ENCODE measurements at regions of chr1 and their contacts with region 1.

Region 1: GRCh38 chr1:154479764-154480421 is 22.1 kb upstream of the TDRD10 start:
- DNase-seq: peak; percentile 84
- H3K4me3 ChIP-seq: no peak overlapping the region; a peak in 1 of 4 replicates
- H3K27ac ChIP-seq: peak overlapping the region; percentile 17 to 78; a peak in 2 of 4 replicates
- H3K4me1 ChIP-seq: peaks cover 5 to 18% of the 10 kb centered on the region in 2 experiments; a peak in 2 of 4 replicates
- H3K27me3 ChIP-seq: no peaks in the 10 kb centered on the region
- CTCF ChIP-seq: peak; percentile 96
- EP300 ChIP-seq: no peak
- RAD21 ChIP-seq: peak; percentile 99

Region 2: GRCh38 chr1:154463512-154463990 is 16.3 kb before region 1 on chr1:
- CTCF ChIA-PET with region 1: interaction called, 36 read pairs
- POLR2A ChIA-PET with region 1: no interaction called
- DNase-seq: no peak
- H3K4me3 ChIP-seq: no peak overlapping the region
- H3K27ac ChIP-seq: peak overlapping the region; percentile 47 to 76; a peak in 3 of 4 replicates
- H3K4me1 ChIP-seq: peaks cover 7 to 8% of the 10 kb centered on the region in 2 experiments; a peak in 2 of 4 replicates
- H3K27me3 ChIP-seq: no peaks in the 10 kb centered on the region
- CTCF ChIP-seq: no peak
- EP300 ChIP-seq: no peak
- RAD21 ChIP-seq: no peak

Region 3: DNA sequence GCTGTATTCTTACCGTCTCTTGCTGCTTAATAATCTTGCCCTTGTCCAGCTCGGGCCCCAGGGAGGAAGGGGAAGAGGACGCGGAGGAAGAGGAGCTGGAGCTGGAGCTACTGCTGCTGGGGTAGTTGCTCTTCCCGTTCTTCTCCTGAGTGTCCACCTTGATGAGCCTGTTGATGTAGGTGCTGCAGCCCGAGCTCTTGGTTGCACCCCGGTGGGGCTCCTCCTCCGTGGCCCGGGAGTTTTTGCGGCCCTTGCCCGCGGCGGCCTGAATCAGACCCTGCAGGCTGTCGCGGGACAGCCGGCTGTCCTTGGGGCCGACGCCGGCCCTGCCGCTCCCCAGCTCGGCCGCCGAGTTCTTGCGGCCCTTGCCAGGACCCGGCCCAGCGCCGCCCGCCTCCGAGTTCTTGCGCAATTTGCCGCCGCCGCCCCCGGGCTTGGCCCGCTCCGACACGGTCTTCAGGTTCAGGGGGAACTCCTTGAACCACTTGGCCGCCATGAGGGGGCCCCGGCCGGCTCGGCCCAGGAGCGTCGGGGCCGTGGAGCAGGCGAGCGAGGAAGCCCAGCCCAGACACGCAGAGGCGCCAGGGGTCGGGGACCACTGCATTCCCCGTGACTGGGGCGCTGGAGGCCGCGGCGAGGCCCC is 21.7 kb after region 1 on chr1:
- CTCF ChIA-PET with region 1: interaction called, 17 read pairs
- POLR2A ChIA-PET with region 1: no interaction called
- DNase-seq: peak; percentile 20
- H3K4me3 ChIP-seq: no peak overlapping the region; a peak in 1 of 4 replicates
- H3K27ac ChIP-seq: no peak overlapping the region
- H3K4me1 ChIP-seq: peaks cover 0 to 2% of the 10 kb centered on the region in 2 experiments; a peak in 1 of 4 replicates
- H3K27me3 ChIP-seq: peaks cover 61% of the 10 kb centered on the region
- CTCF ChIP-seq: no peak
- EP300 ChIP-seq: no peak
- RAD21 ChIP-seq: no peak

Region 4: DNA sequence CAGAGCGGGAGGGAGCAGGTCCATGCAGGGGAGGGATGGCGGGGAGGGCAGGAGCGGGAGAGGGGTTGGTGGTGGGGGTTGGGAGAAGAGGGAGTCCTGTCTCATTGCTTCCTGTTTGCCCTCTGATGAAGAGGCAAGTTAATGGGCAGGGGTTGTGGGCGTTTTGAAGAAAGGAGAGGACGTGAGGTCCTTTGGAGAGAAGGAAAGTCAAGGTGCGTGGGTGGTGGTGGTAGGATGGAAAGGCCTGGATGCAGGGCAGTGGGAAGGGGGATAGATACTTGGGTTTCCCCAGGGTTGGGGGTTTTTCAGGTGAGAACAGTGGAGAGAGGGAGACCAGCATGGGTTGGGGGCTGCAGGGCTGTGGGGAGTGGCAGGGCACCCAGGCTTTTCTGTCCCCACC is 61.3 kb after region 1 on chr1:
- CTCF ChIA-PET with region 1: interaction called, 187 read pairs
- POLR2A ChIA-PET with region 1: interaction called, 3 read pairs
- DNase-seq: no peak
- H3K4me3 ChIP-seq: no peak overlapping the region
- H3K27ac ChIP-seq: no peak overlapping the region
- H3K4me1 ChIP-seq: no peaks in the 10 kb centered on the region
- H3K27me3 ChIP-seq: peaks cover 21% of the 10 kb centered on the region; the same call in 1 of the 2 replicates
- CTCF ChIP-seq: no peak
- EP300 ChIP-seq: no peak
- RAD21 ChIP-seq: no peak

Region 5: DNA sequence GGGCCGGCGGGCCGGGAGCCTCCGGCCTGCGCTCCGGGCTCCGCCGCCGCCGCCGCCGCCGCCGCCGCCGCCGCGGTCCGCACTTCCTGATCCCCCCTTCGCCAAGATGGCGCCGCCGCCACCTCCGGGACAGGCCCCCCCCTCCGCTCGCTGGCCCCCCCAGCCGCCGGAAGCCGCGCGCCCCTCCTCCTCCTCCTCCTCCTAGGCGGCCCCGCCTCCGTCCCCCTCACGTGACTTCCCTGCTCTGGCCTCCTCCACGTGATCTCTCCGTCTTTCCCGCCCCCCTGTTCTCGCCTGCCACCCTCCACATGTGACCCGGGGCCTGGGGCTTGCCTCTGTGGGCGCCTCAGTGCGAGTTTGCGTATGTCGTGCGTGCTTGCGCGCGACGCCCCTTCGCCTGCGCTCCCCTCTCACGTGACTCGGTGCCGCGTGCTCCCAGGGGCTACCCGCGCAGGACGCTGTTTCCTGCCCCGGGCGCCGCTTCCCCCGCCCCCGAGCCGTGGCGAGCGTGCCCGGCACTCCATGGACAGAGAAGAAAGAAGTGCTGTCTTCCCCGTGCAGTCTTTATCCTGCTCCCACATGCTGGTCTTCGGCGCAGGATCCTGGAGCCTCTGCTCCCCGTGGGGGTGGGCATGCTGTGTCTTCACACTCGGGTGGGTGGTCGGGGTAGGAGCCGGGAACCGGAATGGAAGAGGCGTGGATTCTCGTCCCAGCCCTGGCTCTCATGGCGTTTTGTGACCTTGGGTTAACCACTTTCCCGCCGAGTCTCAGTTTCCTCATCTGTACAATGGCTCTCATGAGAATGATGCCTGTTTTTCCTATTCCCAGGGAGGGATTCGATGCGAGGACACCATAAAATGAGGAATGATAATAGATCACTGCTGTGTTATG is 78.9 kb after region 1 on chr1 and contains the start of gene UBE2Q1:
- CTCF ChIA-PET with region 1: interaction called, 63 read pairs
- POLR2A ChIA-PET with region 1: no interaction called
- DNase-seq: peak; percentile 98
- H3K4me3 ChIP-seq: peak within 1 kb of the TSS; percentile 87 to 94
- H3K27ac ChIP-seq: peak within 1 kb of the TSS; percentile 75 to 96
- H3K4me1 ChIP-seq: peaks cover 7 to 32% of the 10 kb centered on the region in 2 experiments; a peak in 2 of 4 replicates
- H3K27me3 ChIP-seq: no peaks in the 10 kb centered on the region
- CTCF ChIP-seq: no peak
- EP300 ChIP-seq: peak; percentile 36 to 51; a peak in 2 of 4 replicates
- RAD21 ChIP-seq: no peak
- polyA plus RNA-seq, gene UBE2Q1: 12.5 and 15.2 TPM in 2 replicates

Region 6: GRCh38 chr1:154730259-154730658 is 250.4 kb after region 1 on chr1:
- CTCF ChIA-PET with region 1: no interaction called
- POLR2A ChIA-PET with region 1: no interaction called
- DNase-seq: no peak
- H3K4me3 ChIP-seq: no peak overlapping the region
- H3K27ac ChIP-seq: no peak overlapping the region
- H3K4me1 ChIP-seq: peaks cover 10 to 26% of the 10 kb centered on the region in 2 experiments; a peak in 2 of 4 replicates
- H3K27me3 ChIP-seq: no peaks in the 10 kb centered on the region
- CTCF ChIP-seq: no peak
- EP300 ChIP-seq: no peak
- RAD21 ChIP-seq: no peak

Region 7: GRCh38 chr1:154779551-154780189 is 299.8 kb after region 1 on chr1:
- CTCF ChIA-PET with region 1: no interaction called
- POLR2A ChIA-PET with region 1: no interaction called
- DNase-seq: no peak
- H3K4me3 ChIP-seq: no peak overlapping the region
- H3K27ac ChIP-seq: no peak overlapping the region; a peak in 1 of 4 replicates
- H3K4me1 ChIP-seq: peaks cover 0 to 25% of the 10 kb centered on the region in 2 experiments; a peak in 1 of 4 replicates
- H3K27me3 ChIP-seq: peaks cover 4% of the 10 kb centered on the region; the same call in 1 of the 2 replicates
- CTCF ChIP-seq: no peak
- EP300 ChIP-seq: no peak
- RAD21 ChIP-seq: no peak